ENCODE measurements at regions of chr3 and their contacts with region 1.

Region 1: GRCh38 chr3:139329345-139329850 is 14.4 kb upstream of the MRPS22 start:
- DNase-seq: peak; percentile 93 to 96 (median 94)
- ATAC-seq: peak; percentile 99
- H3K4me3 ChIP-seq: 0 out of 2 replicates have a peak overlapping the region, but pooled peaks have one; percentile 18
- H3K27ac ChIP-seq: no peak overlapping the region; the same call in 2 of the 3 replicates
- H3K4me1 ChIP-seq: peaks cover 17 to 29% of the 10 kb centered on the region in 2 experiments; a peak in 4 of 5 replicates
- H3K27me3 ChIP-seq: no peaks in the 10 kb centered on the region
- CTCF ChIP-seq: peak; percentile 99 to 100 (median 100)
- EP300 ChIP-seq: peak; percentile 25; the same call in 1 of the 2 replicates
- POLR2A ChIP-seq: no peak
- RAD21 ChIP-seq: peak; percentile 99 to 100

Region 2: GRCh38 chr3:138935848-138936740 is 393.3 kb before region 1 on chr3:
- CTCF ChIA-PET with region 1: no interaction called
- POLR2A ChIA-PET with region 1: interaction called, 3 read pairs
- in situ Hi-C with region 1: loop called (anchors 5 kb)
- intact Hi-C with region 1: loop called (anchors 5 kb)
- DNase-seq: peak; percentile 85 to 91 (median 88)
- ATAC-seq: peak; percentile 88
- H3K4me3 ChIP-seq: peak overlapping the region; percentile 45
- H3K27ac ChIP-seq: peak overlapping the region; percentile 54
- H3K4me1 ChIP-seq: peaks cover 4 to 43% of the 10 kb centered on the region in 2 experiments; a peak in 3 of 5 replicates
- H3K27me3 ChIP-seq: no peaks in the 10 kb centered on the region
- CTCF ChIP-seq: peak; percentile 83 to 88 (median 87)
- EP300 ChIP-seq: no peak
- POLR2A ChIP-seq: peak; percentile 58
- RAD21 ChIP-seq: peak; percentile 55 to 68

Region 3: DNA sequence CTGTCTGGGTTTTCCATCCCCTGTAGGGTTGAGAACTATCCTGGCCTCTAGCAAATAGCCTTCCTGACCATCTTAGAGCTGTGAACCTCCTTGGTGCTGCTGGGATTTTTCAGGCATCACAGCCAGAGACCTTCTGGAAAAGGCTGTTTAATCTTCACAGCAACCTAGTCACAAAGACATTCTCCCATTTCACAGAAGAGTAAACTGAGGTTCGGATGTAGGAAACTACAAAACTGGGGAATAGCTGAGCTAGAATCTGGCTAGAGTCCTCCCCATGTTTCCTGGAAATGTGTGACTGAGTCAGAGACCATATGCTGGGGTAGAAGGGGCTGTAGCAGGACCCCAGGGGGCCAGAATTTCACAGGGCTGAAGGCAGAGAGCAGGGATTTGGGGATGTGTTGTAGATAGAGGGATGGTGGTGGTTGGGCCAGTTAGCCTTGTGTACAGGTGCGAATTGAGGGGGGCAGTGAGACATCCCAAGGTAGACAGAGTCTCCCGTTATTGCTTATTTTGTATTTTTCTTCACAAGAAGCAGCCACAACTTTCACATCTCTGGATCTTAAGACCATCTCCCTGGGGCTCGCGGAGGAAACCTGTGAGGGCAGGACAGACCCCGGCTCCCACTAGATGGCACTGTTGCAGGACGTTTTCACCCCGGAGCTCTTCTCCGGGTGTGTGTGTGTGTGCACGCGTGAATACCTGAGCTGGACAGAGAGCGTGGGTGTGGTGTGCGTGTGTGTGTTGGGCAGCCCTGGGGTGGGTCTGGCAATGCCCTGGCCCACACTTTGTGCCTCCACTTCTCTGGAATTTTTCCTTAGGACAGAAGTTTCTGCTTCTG is 217.8 kb before region 1 on chr3:
- CTCF ChIA-PET with region 1: interaction called, 43 read pairs
- POLR2A ChIA-PET with region 1: no interaction called
- in situ Hi-C with region 1: no loop called
- intact Hi-C with region 1: loop called (anchors 2 kb)
- DNase-seq: peak; percentile 64 to 80 (median 70)
- ATAC-seq: peak; percentile 91
- H3K4me3 ChIP-seq: no peak overlapping the region
- H3K27ac ChIP-seq: no peak overlapping the region
- H3K4me1 ChIP-seq: peaks cover 0 to 5% of the 10 kb centered on the region in 2 experiments; a peak in 2 of 5 replicates
- H3K27me3 ChIP-seq: peaks cover 0 to 6% of the 10 kb centered on the region in 2 experiments; a peak in 3 of 5 replicates
- CTCF ChIP-seq: peak; percentile 83 to 89 (median 84)
- EP300 ChIP-seq: no peak
- POLR2A ChIP-seq: no peak
- RAD21 ChIP-seq: peak; percentile 88 to 92

Region 4: DNA sequence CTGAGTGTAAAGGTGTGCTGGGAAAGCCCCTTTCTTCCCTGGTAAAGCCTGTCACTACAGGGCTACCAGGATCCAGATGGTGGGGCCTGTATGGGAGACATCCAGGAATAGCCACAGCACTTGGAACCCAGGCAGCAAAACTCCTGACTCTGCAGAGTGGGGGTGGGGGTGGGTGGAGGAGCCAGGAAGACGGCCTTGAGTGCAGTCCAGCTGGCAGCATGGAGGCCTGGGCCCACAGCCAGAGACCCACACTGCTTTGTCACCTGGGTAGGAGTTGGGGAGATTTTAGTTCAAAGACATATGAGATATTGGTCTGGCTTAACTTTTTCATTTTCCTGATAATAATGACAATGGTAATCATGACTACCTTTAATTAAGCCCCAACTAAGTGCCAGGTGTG is 102.2 kb before region 1 on chr3:
- CTCF ChIA-PET with region 1: no interaction called
- POLR2A ChIA-PET with region 1: no interaction called
- in situ Hi-C with region 1: no loop called
- intact Hi-C with region 1: loop called (anchors 10 kb)
- DNase-seq: no peak
- ATAC-seq: no peak
- H3K4me3 ChIP-seq: no peak overlapping the region
- H3K27ac ChIP-seq: no peak overlapping the region
- H3K4me1 ChIP-seq: peaks cover 2 to 8% of the 10 kb centered on the region in 2 experiments; a peak in 3 of 5 replicates
- H3K27me3 ChIP-seq: no peaks in the 10 kb centered on the region
- CTCF ChIP-seq: no peak
- EP300 ChIP-seq: no peak
- POLR2A ChIP-seq: no peak
- RAD21 ChIP-seq: no peak

Region 5: DNA sequence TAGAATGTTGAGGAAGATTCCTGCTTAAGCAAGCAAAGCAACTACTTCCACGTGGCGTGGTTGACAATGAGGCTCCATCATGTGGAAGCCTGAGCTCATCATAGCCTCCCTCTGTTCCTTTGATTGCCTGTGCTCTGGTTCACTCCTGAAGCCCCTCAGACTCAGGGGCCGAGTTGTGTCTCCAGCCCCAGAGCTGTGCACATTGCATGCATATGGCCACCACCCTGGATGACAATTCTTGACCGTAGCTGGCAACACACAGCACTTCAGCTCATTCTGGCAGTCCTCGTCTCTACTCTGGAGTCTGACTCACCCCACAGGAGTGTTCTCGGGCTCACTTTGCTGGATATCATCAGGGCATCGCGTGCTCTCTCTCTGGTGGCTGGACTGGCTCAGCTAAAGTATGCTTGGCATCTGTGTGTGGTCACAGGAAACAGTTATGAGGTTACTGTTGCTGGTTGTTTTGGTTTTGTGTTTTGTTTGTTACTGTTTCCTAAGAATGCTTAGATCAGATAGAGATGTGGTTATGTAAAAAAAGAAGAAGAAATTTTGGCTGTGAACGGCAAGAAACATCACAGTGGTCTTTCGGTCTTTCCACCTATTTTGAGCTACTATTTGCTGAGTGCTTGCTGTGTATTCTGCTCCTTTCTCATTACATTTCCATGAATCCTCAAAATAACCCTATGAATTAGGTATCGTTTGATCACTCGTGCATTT is 27.2 kb before region 1 on chr3:
- CTCF ChIA-PET with region 1: no interaction called
- POLR2A ChIA-PET with region 1: no interaction called
- in situ Hi-C with region 1: no loop called
- intact Hi-C with region 1: loop called (anchors 2 kb)
- DNase-seq: no peak
- ATAC-seq: no peak
- H3K4me3 ChIP-seq: no peak overlapping the region
- H3K27ac ChIP-seq: peak overlapping the region; percentile 12; the same call in 1 of the 3 replicates
- H3K4me1 ChIP-seq: peaks cover 42 to 74% of the 10 kb centered on the region in 2 experiments
- H3K27me3 ChIP-seq: no peaks in the 10 kb centered on the region; a peak in 1 of 5 replicates
- CTCF ChIP-seq: no peak
- EP300 ChIP-seq: no peak
- POLR2A ChIP-seq: no peak
- RAD21 ChIP-seq: no peak

Region 6: DNA sequence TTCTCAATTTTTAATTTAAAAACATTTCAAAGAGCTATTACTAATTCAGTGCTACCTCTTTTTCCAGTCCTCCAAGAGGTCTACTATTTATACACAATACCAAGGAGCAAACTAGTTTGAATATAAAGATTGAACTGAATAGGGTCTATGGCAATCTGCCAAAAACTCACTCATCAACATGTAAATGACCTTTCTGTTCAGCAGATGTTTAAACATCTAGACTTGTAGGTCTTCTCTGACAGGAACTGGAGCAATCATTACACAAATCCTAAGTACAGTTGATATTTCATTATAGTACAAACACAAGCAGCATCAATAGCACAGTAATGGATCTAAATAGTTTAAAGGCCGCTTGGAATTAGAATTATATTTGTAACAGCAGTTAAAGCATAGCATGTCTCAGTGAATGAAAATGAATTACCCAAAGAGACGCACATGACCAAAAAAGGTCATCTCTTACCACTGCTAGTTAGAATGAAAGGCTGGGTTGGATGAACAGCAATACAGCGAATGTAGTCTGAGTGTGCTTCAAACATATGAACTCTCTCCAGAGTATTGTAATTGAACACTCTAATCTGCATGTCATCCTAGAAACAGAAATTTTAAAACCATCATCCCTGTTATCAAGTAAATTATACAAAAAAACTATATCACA is 49.3 kb after region 1 on chr3:
- CTCF ChIA-PET with region 1: no interaction called
- POLR2A ChIA-PET with region 1: no interaction called
- in situ Hi-C with region 1: no loop called
- intact Hi-C with region 1: no loop called
- DNase-seq: peak in 1 of 4 experiments; percentile 26
- ATAC-seq: no peak
- H3K4me3 ChIP-seq: no peak overlapping the region
- H3K27ac ChIP-seq: no peak overlapping the region
- H3K4me1 ChIP-seq: no peaks in the 10 kb centered on the region; a peak in 2 of 5 replicates
- H3K27me3 ChIP-seq: no peaks in the 10 kb centered on the region
- CTCF ChIP-seq: no peak
- EP300 ChIP-seq: no peak
- POLR2A ChIP-seq: no peak
- RAD21 ChIP-seq: no peak

Measured in K562 (cell line).